Naive thymus-derived CD4-positive, alpha-beta T cell (primary cell): ENCODE measurements at regions of chr4 and their contacts with region 1.

Region 1: GRCh38 chr4:119314356-119314755 is 7.6 kb downstream of the FABP2 start:
- DNase-seq: peak in 7 of 9 donors; percentile 37 to 72 (median 61)
- ATAC-seq: peak; percentile 80
- H3K4me3 ChIP-seq: no peak overlapping the region
- H3K4me3 Mint-ChIP-seq: no peak overlapping the region
- H3K27ac ChIP-seq: no peak overlapping the region
- H3K27ac Mint-ChIP-seq: peak overlapping the region in 2 of 9 donors; percentile 1 to 17
- H3K4me1 ChIP-seq: no peaks in the 10 kb centered on the region
- H3K4me1 Mint-ChIP-seq: peaks cover 0 to 2% (median 0%) of the 10 kb centered on the region in 7 donors
- H3K27me3 ChIP-seq: no peaks in the 10 kb centered on the region
- H3K27me3 Mint-ChIP-seq: peaks cover 0 to 40% (median 8%) of the 10 kb centered on the region in 5 donors

Region 2: GRCh38 chr4:119490335-119490734 is 176.0 kb after region 1 on chr4:
- CTCF ChIA-PET with region 1: interaction called, 6 read pairs
- POLR2A ChIA-PET with region 1: no interaction called
- intact Hi-C with region 1: loop called (anchors 1 to 2 kb)
- DNase-seq: no peak
- ATAC-seq: no peak
- H3K4me3 ChIP-seq: no peak overlapping the region
- H3K4me3 Mint-ChIP-seq: no peak overlapping the region
- H3K27ac ChIP-seq: no peak overlapping the region
- H3K27ac Mint-ChIP-seq: peak overlapping the region in 1 of 9 donors; percentile 64
- H3K4me1 ChIP-seq: no peaks in the 10 kb centered on the region
- H3K4me1 Mint-ChIP-seq: no peaks in the 10 kb centered on the region
- H3K27me3 ChIP-seq: no peaks in the 10 kb centered on the region
- H3K27me3 Mint-ChIP-seq: no peaks in the 10 kb centered on the region

Region 3: GRCh38 chr4:119559044-119559647 is 244.8 kb after region 1 on chr4:
- CTCF ChIA-PET with region 1: no interaction called
- POLR2A ChIA-PET with region 1: no interaction called
- intact Hi-C with region 1: loop called in 1 of 2 experiments (anchors 1 kb)
- DNase-seq: no peak
- ATAC-seq: no peak
- H3K4me3 ChIP-seq: no peak overlapping the region
- H3K4me3 Mint-ChIP-seq: no peak overlapping the region
- H3K27ac ChIP-seq: no peak overlapping the region
- H3K27ac Mint-ChIP-seq: no peak overlapping the region
- H3K4me1 ChIP-seq: no peaks in the 10 kb centered on the region
- H3K4me1 Mint-ChIP-seq: no peaks in the 10 kb centered on the region
- H3K27me3 ChIP-seq: no peaks in the 10 kb centered on the region
- H3K27me3 Mint-ChIP-seq: no peaks in the 10 kb centered on the region

Region 4: DNA sequence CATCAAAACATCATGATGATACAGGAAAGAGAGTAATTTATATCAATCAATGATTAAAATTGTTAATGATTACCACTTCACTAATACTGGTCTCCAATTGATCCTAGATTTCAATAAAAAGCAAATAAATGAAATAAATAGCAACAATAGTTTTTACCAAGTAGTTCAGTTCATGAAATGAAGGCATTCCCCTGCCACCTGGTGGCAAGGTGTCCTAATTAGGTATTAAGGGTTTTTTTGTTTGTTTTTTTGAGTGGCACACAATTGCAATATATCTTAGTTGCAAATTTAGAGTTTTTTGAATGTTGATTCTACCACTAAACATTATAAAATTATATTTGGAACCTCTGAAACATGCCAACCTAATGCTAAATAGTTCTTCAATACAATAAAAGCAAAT is 471.6 kb after region 1 on chr4:
- CTCF ChIA-PET with region 1: no interaction called
- POLR2A ChIA-PET with region 1: no interaction called
- intact Hi-C with region 1: loop called in 1 of 2 experiments (anchors 1 kb)
- DNase-seq: no peak
- ATAC-seq: no peak
- H3K4me3 ChIP-seq: no peak overlapping the region
- H3K4me3 Mint-ChIP-seq: no peak overlapping the region
- H3K27ac ChIP-seq: no peak overlapping the region
- H3K27ac Mint-ChIP-seq: no peak overlapping the region
- H3K4me1 ChIP-seq: no peaks in the 10 kb centered on the region
- H3K4me1 Mint-ChIP-seq: peaks cover 0 to 2% (median 0%) of the 10 kb centered on the region in 7 donors
- H3K27me3 ChIP-seq: no peaks in the 10 kb centered on the region
- H3K27me3 Mint-ChIP-seq: peaks cover 0 to 23% (median 5%) of the 10 kb centered on the region in 5 donors